CD8-positive, alpha-beta T cell (primary cell): ENCODE measurements at regions of chr5 and their contacts with region 1.

Region 1: DNA sequence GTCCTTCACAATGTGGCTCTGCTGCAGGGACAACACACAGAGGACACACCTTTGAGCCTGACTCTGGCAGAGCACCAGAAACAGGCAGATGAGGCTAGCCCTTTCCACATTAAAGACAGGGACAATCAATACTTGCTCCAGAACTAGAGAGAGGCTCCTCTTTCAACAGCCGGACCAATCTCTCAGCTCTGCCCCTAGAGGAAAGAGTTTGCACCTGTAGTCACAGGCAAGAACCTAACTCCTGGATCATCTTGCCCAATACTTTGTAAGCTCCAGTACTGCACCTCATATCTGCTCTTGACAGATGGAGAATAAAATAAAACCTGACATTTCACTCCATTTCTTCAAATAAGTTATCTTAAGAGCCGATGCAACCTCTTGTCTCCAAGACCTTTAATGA is 52.1 kb downstream of the EPB41L4A start:
- DNase-seq: no peak
- ATAC-seq: no peak
- H3K4me3 ChIP-seq: no peak overlapping the region
- H3K4me3 Mint-ChIP-seq: no peak overlapping the region
- H3K27ac ChIP-seq: no peak overlapping the region
- H3K27ac Mint-ChIP-seq: no peak overlapping the region
- H3K4me1 ChIP-seq: no peaks in the 10 kb centered on the region
- H3K4me1 Mint-ChIP-seq: no peaks in the 10 kb centered on the region
- H3K27me3 ChIP-seq: no peaks in the 10 kb centered on the region
- H3K27me3 Mint-ChIP-seq: peaks cover 13% of the 10 kb centered on the region
- CTCF ChIP-seq: no peak

Region 2: DNA sequence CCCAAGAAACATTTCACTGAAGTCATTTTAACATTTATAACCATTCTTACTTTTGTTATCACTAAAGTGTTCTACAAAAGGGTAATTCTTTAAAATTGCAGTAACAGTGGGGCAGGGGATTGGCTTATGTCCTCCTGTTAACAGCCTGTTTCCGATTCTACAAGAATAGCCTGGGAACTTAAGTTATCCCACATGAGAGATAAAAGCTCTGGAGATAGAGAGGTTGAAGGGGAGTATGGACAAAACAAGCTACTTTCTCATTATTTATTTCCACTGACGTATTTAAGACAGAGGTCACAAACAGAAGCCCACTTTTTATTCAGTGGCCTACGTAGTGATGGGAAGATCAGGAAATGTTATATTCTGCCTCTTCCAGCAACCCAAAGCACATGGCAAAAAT is 46.6 kb before region 1 on chr5:
- CTCF ChIA-PET with region 1: no interaction called
- POLR2A ChIA-PET with region 1: no interaction called
- intact Hi-C with region 1: loop called in 1 of 2 experiments (anchors 1 kb)
- DNase-seq: no peak
- ATAC-seq: no peak
- H3K4me3 ChIP-seq: no peak overlapping the region
- H3K4me3 Mint-ChIP-seq: no peak overlapping the region
- H3K27ac ChIP-seq: no peak overlapping the region
- H3K27ac Mint-ChIP-seq: no peak overlapping the region
- H3K4me1 ChIP-seq: no peaks in the 10 kb centered on the region
- H3K4me1 Mint-ChIP-seq: no peaks in the 10 kb centered on the region
- H3K27me3 ChIP-seq: no peaks in the 10 kb centered on the region
- H3K27me3 Mint-ChIP-seq: peaks cover 17% of the 10 kb centered on the region
- CTCF ChIP-seq: no peak